Endothelial cell of umbilical vein (primary cell): ENCODE measurements at regions of chr15 and their contacts with region 1.

Region 1: DNA sequence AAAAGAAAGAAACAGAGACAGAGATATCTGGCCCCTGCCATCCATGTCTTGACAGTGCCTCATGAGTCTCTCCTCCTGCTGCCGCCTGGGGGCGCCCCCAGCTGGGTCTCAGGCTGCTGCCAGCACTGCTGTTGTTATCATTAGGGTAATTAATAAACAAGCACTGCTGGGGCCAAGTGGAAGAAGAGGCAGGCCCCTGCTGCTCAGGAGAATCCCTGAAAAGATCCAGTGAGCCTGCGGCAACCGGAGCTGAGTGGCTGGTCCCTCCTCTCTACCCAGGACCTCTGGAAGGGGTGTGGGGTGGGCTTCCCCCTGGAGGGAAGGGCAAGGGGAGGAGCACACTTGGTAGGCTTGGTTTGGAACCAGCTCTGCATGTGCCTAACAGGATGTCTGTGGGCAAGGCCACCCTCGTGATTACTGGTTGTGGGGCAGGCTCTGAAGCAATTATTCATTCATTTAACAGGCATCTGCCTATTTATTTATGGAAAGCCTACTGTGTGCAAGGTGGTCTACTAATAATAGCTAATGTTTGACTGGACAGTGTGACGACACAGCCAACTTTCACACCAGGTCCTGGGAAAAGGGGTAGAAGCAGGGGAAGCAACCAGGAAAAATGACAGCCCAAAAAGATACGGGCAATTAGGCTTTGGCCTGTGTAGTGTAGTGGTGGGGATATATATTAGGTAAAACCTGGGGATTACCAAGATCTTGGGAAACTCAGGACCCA is 1.2 kb upstream of the TYRO3 start:
- DNase-seq: peak; percentile 82
- H3K4me3 ChIP-seq: peak overlapping the region in 1 of 3 experiments; percentile 35
- H3K27ac ChIP-seq: no peak overlapping the region
- H3K4me1 ChIP-seq: peaks cover 22% of the 10 kb centered on the region
- H3K27me3 ChIP-seq: no peaks in the 10 kb centered on the region
- CTCF ChIP-seq: peak; percentile 90 to 91
- POLR2A ChIP-seq: no peak

Region 2: DNA sequence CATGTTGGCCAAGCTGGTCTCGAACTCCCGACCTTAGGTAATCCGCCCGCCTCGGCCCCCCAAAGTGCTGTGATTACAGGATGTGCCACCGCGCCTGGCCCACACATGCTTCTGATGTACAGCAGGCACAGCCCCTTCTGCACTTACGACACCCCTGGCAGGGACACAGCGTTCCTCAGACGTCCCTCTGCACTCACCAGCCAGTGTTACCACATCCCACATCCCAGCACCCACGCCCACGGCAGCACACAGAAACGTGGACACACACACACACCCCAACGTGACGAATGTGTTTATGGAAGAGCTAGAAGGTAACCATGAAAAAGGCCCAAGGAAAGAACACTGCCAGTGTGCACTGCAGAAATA is 13.2 kb before region 1 on chr15:
- CTCF ChIA-PET with region 1: interaction called, 13 read pairs
- POLR2A ChIA-PET with region 1: no interaction called
- dilution Hi-C with region 1: no loop called
- intact Hi-C with region 1: loop called (anchors 1 kb)
- DNase-seq: no peak
- H3K4me3 ChIP-seq: no peak overlapping the region
- H3K27ac ChIP-seq: no peak overlapping the region
- H3K4me1 ChIP-seq: peaks cover 6% of the 10 kb centered on the region
- H3K27me3 ChIP-seq: no peaks in the 10 kb centered on the region
- CTCF ChIP-seq: no peak
- POLR2A ChIP-seq: no peak

Region 3: DNA sequence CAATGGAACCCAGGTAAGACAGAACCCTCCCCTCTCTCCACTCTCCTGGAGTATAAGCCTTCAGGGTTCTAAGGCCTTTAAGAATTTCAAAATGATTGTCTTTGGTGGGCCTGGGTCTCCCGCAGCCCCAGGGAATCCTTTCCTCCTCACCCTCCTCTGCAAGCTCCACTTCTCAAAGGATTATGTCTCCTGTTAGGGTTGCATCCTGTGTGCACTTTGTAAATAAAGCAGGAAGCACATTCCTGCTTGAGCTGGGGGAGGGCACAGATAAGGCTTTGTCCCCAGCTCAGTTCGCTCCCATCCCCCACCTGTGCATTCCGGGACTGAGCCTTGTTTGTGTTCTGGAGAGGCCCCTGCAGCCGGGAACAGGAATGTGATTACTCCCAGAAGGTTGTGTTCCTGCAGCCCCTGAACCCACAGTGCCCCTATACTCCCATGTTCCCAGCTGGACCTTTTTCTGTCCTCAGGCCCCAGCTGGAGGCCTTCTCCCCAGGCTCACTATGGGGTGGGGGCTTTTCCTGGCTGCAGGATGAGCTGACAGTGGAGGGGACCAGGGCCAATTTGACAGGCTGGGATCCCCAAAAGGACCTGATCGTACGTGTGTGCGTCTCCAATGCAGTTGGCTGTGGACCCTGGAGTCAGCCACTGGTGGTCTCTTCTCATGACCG is 10.6 kb after region 1 on chr15:
- CTCF ChIA-PET with region 1: interaction called, 16 read pairs
- POLR2A ChIA-PET with region 1: no interaction called
- dilution Hi-C with region 1: no loop called
- intact Hi-C with region 1: no loop called
- DNase-seq: peak; percentile 16
- H3K4me3 ChIP-seq: no peak overlapping the region
- H3K27ac ChIP-seq: no peak overlapping the region
- H3K4me1 ChIP-seq: no peaks in the 10 kb centered on the region
- H3K27me3 ChIP-seq: no peaks in the 10 kb centered on the region
- CTCF ChIP-seq: no peak
- POLR2A ChIP-seq: no peak

Region 4: DNA sequence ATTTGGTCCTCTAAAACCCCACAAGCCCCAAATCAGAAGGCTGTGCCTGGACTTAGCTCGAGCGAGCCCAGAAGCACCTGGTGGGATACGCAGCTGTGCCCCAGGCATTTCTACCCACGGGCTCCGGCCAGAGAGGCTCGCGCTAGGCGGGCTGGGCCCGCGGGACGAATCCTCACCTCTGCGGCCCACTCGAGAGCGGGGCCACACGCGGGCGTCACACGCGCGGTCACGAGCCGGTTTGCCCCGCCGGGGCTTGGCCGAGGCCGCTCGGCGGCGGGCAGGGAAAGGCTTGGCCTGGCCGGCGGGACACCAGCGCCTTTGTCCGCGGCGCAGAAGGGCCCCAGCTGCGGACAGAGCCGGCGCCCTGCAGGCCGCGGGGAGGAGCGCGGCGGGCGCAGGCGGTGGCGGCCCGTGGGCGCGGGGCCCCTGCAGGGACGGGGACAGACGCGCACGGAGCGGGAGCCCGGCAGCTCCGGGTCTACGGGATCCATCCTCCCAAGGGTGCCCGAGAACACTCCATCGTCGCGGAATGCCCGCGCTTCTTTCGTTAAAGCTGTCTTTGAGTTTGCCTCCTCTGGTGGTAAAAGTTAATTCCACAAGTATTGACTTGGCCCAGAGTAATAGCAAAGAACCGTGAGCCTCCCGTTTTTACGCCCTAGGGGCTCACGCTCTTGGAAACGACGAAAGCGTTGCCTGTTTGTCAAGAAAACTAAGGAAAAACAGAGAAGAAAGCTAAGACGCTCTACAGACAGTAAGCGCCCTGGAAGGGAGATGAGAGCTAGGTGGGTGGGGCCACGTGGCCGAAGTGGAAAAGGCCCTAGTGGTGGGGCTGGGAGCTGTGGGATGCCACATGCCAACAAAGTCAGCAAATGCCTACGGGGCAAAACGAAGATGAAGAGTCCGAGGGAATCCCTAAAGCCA is 27.6 kb after region 1 on chr15:
- CTCF ChIA-PET with region 1: interaction called, 29 read pairs
- POLR2A ChIA-PET with region 1: no interaction called
- dilution Hi-C with region 1: no loop called
- intact Hi-C with region 1: loop called (anchors 1 kb)
- DNase-seq: peak; percentile 73
- H3K4me3 ChIP-seq: peak overlapping the region; percentile 29 to 59 (median 51)
- H3K27ac ChIP-seq: no peak overlapping the region
- H3K4me1 ChIP-seq: peaks cover 9% of the 10 kb centered on the region
- H3K27me3 ChIP-seq: peaks cover 2 to 5% of the 10 kb centered on the region in 2 experiments
- CTCF ChIP-seq: peak; percentile 32 to 62
- POLR2A ChIP-seq: no peak

Region 5: GRCh38 chr15:41660235-41661077 is 102.6 kb after region 1 on chr15 and contains the start of gene MGA:
- CTCF ChIA-PET with region 1: interaction called, 5 read pairs
- POLR2A ChIA-PET with region 1: no interaction called
- dilution Hi-C with region 1: no loop called
- intact Hi-C with region 1: loop called (anchors 5 kb)
- DNase-seq: peak; percentile 93
- H3K4me3 ChIP-seq: peak within 1 kb of the TSS; percentile 8 to 42 (median 40)
- H3K27ac ChIP-seq: peak within 1 kb of the TSS; percentile 66
- H3K4me1 ChIP-seq: peaks cover 26% of the 10 kb centered on the region
- H3K27me3 ChIP-seq: peaks cover 2 to 14% of the 10 kb centered on the region in 2 experiments
- CTCF ChIP-seq: no peak
- POLR2A ChIP-seq: peak; percentile 59
- total RNA-seq, gene MGA: 34.0 and 36.5 TPM in 2 replicates

Region 6: GRCh38 chr15:41811432-41812195 is 253.8 kb after region 1 on chr15:
- CTCF ChIA-PET with region 1: interaction called, 5 read pairs
- POLR2A ChIA-PET with region 1: no interaction called
- dilution Hi-C with region 1: no loop called
- intact Hi-C with region 1: loop called (anchors 1 kb)
- DNase-seq: peak; percentile 84
- H3K4me3 ChIP-seq: no peak overlapping the region
- H3K27ac ChIP-seq: no peak overlapping the region
- H3K4me1 ChIP-seq: peaks cover 8% of the 10 kb centered on the region
- H3K27me3 ChIP-seq: no peaks in the 10 kb centered on the region
- CTCF ChIP-seq: peak; percentile 93 to 94
- POLR2A ChIP-seq: no peak